ENCODE measurements at regions of chr10 and their contacts with region 1.

Region 1: DNA sequence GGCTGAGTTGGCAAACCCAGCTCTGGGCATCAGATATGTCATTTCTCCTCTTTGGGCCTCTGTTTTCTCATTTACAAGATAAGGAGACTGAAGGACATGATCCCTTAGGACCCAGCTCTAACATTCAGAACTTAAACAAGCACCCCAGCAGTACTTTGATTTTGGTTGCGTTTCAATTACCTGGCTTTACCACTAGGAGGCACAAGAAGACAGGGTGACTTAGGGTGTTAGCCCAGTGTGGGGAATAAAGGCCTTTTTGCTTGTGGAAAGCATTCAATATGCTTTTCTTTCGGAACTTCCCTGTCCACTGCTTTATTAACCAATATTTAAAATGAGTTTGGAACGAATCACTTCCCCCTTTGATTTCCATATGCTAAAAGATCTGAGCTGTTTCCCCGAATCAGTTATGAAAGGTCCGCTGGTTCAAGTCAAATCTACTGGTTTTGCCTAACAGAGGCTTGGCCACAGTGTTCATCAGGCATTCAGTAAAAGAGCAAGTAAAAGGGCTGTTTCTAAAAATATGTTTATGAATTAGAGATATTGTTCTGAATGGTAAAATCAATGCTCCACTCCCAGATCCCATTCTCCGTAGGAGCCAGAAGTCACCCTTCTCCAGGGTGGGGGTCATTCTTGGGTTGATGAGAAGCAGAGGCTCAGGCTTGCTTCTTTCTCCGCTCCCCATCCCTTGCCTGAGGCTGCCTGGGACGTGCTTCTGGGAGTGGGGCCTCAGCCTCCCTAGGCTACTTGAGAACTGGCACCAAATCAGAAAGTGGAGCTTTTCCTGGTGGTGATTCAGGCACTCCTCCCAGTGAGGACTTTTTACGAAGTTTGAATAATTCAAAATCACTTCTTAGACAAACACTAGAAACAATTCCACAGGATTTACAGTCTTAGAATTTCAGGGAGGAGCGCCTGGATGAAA is 105.5 kb downstream of the MYOF start:
- DNase-seq: peak; percentile 56 to 80
- H3K4me3 ChIP-seq: no peak overlapping the region
- H3K4me3 Mint-ChIP-seq: no peak overlapping the region
- H3K27ac Mint-ChIP-seq: peak overlapping the region; percentile 60
- H3K4me1 ChIP-seq: 0 out of 2 replicates have a peak, but pooled peaks cover 13% of the 10 kb centered on the region
- H3K4me1 Mint-ChIP-seq: peaks cover 27% of the 10 kb centered on the region
- H3K27me3 ChIP-seq: no peaks in the 10 kb centered on the region
- H3K27me3 Mint-ChIP-seq: no peaks in the 10 kb centered on the region
- CTCF ChIP-seq: peak; percentile 89 to 91

Region 2: GRCh38 chr10:93352638-93353383 is 23.8 kb before region 1 on chr10:
- CTCF ChIA-PET with region 1: no interaction called
- POLR2A ChIA-PET with region 1: no interaction called
- intact Hi-C with region 1: no loop called
- DNase-seq: peak in 1 of 2 experiments; percentile 58
- H3K4me3 ChIP-seq: no peak overlapping the region
- H3K4me3 Mint-ChIP-seq: no peak overlapping the region
- H3K27ac Mint-ChIP-seq: no peak overlapping the region
- H3K4me1 ChIP-seq: peaks cover 3% of the 10 kb centered on the region; the same call in 1 of the 2 replicates
- H3K4me1 Mint-ChIP-seq: peaks cover 4% of the 10 kb centered on the region
- H3K27me3 ChIP-seq: no peaks in the 10 kb centered on the region
- H3K27me3 Mint-ChIP-seq: no peaks in the 10 kb centered on the region
- CTCF ChIP-seq: peak; percentile 42 to 61

Region 3: DNA sequence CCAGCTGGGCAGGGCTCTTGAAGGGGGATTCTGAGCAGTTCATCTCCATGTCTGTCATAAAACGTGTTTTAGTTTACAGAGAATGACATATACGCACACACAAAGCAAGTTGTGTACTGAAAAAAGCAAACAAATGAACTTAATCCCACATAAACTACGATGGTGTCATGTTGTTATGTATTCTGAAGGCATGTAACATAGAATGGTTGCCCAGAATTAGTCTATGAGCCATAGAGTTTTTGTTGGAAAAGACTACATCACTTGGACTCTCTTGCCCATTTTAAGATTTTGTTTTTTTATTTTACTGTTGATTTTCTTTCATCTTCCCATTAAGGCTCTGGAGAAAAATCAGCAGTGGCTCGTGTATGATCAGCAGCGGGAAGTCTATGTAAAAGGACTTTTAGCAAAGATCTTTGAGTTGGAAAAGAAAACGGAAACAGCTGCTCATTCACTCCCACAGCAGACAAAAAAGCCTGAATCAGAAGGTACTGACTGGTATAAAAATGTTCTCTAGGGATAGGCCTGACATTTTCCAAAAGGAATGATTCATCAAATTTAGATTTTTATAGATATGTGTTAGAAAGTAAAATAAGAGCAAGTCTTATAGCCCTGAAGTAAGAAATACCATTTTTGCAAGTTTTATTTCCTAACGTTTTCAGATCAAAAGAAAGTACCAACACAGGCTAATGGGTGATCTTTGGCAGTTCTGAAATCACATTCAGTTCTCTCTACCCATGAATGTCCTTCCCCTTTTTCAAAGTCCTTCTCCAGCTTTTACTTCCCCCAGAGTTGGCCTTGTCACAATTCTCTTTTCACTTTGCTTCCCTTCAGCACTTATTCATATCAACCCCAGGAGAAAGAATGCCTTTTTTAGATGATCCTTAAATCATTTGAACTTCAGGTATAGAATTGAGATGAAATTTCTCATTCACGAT is 138.7 kb after region 1 on chr10:
- CTCF ChIA-PET with region 1: interaction called, 3 read pairs
- POLR2A ChIA-PET with region 1: no interaction called
- intact Hi-C with region 1: loop called (anchors 1 kb)
- DNase-seq: no peak
- H3K4me3 ChIP-seq: no peak overlapping the region
- H3K4me3 Mint-ChIP-seq: no peak overlapping the region
- H3K27ac Mint-ChIP-seq: no peak overlapping the region
- H3K4me1 ChIP-seq: no peaks in the 10 kb centered on the region
- H3K4me1 Mint-ChIP-seq: peaks cover 3% of the 10 kb centered on the region
- H3K27me3 ChIP-seq: no peaks in the 10 kb centered on the region
- H3K27me3 Mint-ChIP-seq: no peaks in the 10 kb centered on the region
- CTCF ChIP-seq: no peak

Region 4: DNA sequence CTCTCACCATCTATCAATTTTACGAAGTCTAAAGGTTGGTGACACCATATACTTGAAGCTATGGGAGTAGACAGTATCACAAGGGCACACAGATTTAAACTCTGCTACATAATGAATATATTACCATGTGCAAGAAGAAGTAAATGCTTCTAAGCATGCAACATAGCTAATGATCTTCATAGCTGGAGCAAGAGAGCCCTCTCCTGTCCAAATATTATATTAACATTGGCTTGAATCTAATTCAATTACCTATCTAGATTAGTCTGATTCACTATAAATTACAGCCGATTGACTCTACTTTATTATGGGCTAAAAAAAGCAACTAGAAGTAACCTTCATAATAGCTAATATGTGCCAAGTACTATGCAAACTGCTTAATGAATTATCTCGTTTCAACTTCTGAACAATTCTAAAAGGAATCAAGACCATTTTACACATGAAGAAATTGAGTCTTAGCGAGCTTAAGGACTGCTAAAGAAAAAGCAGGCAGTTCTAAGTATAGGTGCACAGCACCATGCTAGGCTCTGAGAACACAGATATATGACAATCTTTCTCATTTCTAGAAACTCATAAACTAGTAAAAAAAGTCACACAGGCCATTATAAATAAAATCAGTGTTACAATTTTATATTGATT is 303.9 kb after region 1 on chr10:
- CTCF ChIA-PET with region 1: interaction called, 4 read pairs
- POLR2A ChIA-PET with region 1: no interaction called
- intact Hi-C with region 1: loop called (anchors 1 kb)
- DNase-seq: peak in 1 of 2 experiments; percentile 56
- H3K4me3 ChIP-seq: no peak overlapping the region
- H3K4me3 Mint-ChIP-seq: no peak overlapping the region
- H3K27ac Mint-ChIP-seq: no peak overlapping the region
- H3K4me1 ChIP-seq: peaks cover 16% of the 10 kb centered on the region; the same call in 1 of the 2 replicates
- H3K4me1 Mint-ChIP-seq: peaks cover 7% of the 10 kb centered on the region
- H3K27me3 ChIP-seq: no peaks in the 10 kb centered on the region
- H3K27me3 Mint-ChIP-seq: no peaks in the 10 kb centered on the region
- CTCF ChIP-seq: peak; percentile 30 to 66

Measured in Caco-2 (cell line).